Mammary epithelial cell (primary cell): ENCODE measurements at regions of chr10 and their contacts with region 1.

Region 1: GRCh38 chr10:8221451-8221850 is 167.0 kb downstream of the GATA3 start:
- DNase-seq: no peak
- H3K4me3 ChIP-seq: no peak overlapping the region
- H3K27ac ChIP-seq: no peak overlapping the region
- H3K4me1 ChIP-seq: peaks cover 5% of the 10 kb centered on the region
- H3K27me3 ChIP-seq: no peaks in the 10 kb centered on the region
- CTCF ChIP-seq: no peak

Region 2: GRCh38 chr10:8245131-8245813 is 23.8 kb after region 1 on chr10:
- CTCF ChIA-PET with region 1: no interaction called
- dilution Hi-C with region 1: no loop called
- in situ Hi-C with region 1: no loop called
- intact Hi-C with region 1: loop called (anchors 1 kb)
- DNase-seq: no peak
- H3K4me3 ChIP-seq: no peak overlapping the region
- H3K27ac ChIP-seq: no peak overlapping the region
- H3K4me1 ChIP-seq: peaks cover 5% of the 10 kb centered on the region
- H3K27me3 ChIP-seq: no peaks in the 10 kb centered on the region
- CTCF ChIP-seq: no peak